ENCODE measurements at regions of chr6 and their contacts with region 1.

Region 1: DNA sequence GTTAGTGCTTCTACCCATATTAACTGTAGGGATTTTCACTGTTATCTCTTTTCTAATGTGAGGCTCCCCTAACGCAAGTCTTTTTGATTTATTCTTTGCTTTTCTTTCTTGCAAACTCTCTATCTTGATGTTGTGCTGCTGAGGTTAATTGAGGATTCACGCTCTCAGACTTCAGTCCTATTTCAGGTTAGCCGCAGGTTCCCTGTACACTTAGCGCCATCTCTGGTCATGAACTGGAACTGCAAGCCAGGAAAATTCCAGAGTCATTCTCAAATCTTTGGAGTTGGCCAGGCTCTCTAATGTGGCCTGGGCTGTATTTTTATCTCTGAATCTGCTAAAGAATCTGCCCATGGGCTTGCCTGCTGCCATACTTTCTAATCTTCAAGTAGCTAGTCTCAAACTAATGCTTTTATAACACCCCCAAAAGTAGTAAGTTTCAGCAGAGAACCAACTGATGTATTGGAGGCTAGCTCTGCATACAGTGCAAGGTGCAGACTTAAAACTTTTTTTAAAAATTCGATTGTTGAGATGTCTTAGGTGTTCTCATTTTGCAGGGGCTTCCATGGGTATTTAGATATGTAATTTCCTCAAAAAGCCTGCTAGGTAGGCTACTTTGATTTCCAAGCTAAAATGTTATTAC is 91.1 kb upstream of the OPRM1 start:
- DNase-seq: peak; percentile 20
- ATAC-seq: peak; percentile 85
- H3K4me3 ChIP-seq: no peak overlapping the region
- H3K27ac ChIP-seq: no peak overlapping the region
- H3K4me1 ChIP-seq: no peaks in the 10 kb centered on the region
- H3K27me3 ChIP-seq: no peaks in the 10 kb centered on the region
- CTCF ChIP-seq: peak; percentile 85
- EP300 ChIP-seq: no peak
- POLR2A ChIP-seq: no peak
- RAD21 ChIP-seq: peak; percentile 47

Region 2: GRCh38 chr6:153032255-153032882 is 915.6 kb before region 1 on chr6:
- CTCF ChIA-PET with region 1: no interaction called
- POLR2A ChIA-PET with region 1: no interaction called
- in situ Hi-C with region 1: no loop called
- intact Hi-C with region 1: loop called (anchors 5 kb)
- DNase-seq: peak; percentile 22
- ATAC-seq: no peak
- H3K4me3 ChIP-seq: no peak overlapping the region
- H3K27ac ChIP-seq: no peak overlapping the region
- H3K4me1 ChIP-seq: peaks cover 12% of the 10 kb centered on the region
- H3K27me3 ChIP-seq: no peaks in the 10 kb centered on the region
- CTCF ChIP-seq: peak; percentile 25; the same call in 1 of the 2 replicates
- EP300 ChIP-seq: no peak
- POLR2A ChIP-seq: no peak
- RAD21 ChIP-seq: no peak

Region 3: GRCh38 chr6:153553627-153554026 is 394.3 kb before region 1 on chr6:
- CTCF ChIA-PET with region 1: no interaction called
- POLR2A ChIA-PET with region 1: no interaction called
- in situ Hi-C with region 1: no loop called
- intact Hi-C with region 1: loop called (anchors 10 kb)
- DNase-seq: peak; percentile 4
- ATAC-seq: peak; percentile 79
- H3K4me3 ChIP-seq: no peak overlapping the region
- H3K27ac ChIP-seq: no peak overlapping the region
- H3K4me1 ChIP-seq: no peaks in the 10 kb centered on the region
- H3K27me3 ChIP-seq: no peaks in the 10 kb centered on the region
- CTCF ChIP-seq: peak; percentile 36; the same call in 1 of the 2 replicates
- EP300 ChIP-seq: no peak
- POLR2A ChIP-seq: no peak
- RAD21 ChIP-seq: no peak

Region 4: GRCh38 chr6:153790876-153791473 is 157.0 kb before region 1 on chr6:
- CTCF ChIA-PET with region 1: no interaction called
- POLR2A ChIA-PET with region 1: no interaction called
- in situ Hi-C with region 1: no loop called
- intact Hi-C with region 1: loop called (anchors 5 kb)
- DNase-seq: peak; percentile 37
- ATAC-seq: peak; percentile 60
- H3K4me3 ChIP-seq: no peak overlapping the region
- H3K27ac ChIP-seq: no peak overlapping the region
- H3K4me1 ChIP-seq: peaks cover 7% of the 10 kb centered on the region
- H3K27me3 ChIP-seq: no peaks in the 10 kb centered on the region
- CTCF ChIP-seq: peak; percentile 50
- EP300 ChIP-seq: no peak
- POLR2A ChIP-seq: no peak
- RAD21 ChIP-seq: no peak

Region 5: GRCh38 chr6:153927867-153928266 is 20.1 kb before region 1 on chr6:
- CTCF ChIA-PET with region 1: no interaction called
- POLR2A ChIA-PET with region 1: no interaction called
- in situ Hi-C with region 1: no loop called
- intact Hi-C with region 1: no loop called
- DNase-seq: no peak
- ATAC-seq: no peak
- H3K4me3 ChIP-seq: no peak overlapping the region
- H3K27ac ChIP-seq: no peak overlapping the region
- H3K4me1 ChIP-seq: no peaks in the 10 kb centered on the region
- H3K27me3 ChIP-seq: no peaks in the 10 kb centered on the region
- CTCF ChIP-seq: no peak
- EP300 ChIP-seq: no peak
- POLR2A ChIP-seq: no peak
- RAD21 ChIP-seq: no peak

Region 6: GRCh38 chr6:154095571-154095970 is 147.6 kb after region 1 on chr6:
- CTCF ChIA-PET with region 1: no interaction called
- POLR2A ChIA-PET with region 1: no interaction called
- in situ Hi-C with region 1: no loop called
- intact Hi-C with region 1: no loop called
- DNase-seq: no peak
- ATAC-seq: no peak
- H3K4me3 ChIP-seq: no peak overlapping the region
- H3K27ac ChIP-seq: no peak overlapping the region
- H3K4me1 ChIP-seq: no peaks in the 10 kb centered on the region
- H3K27me3 ChIP-seq: no peaks in the 10 kb centered on the region; a peak in 1 of 5 replicates
- CTCF ChIP-seq: no peak
- EP300 ChIP-seq: no peak
- POLR2A ChIP-seq: no peak
- RAD21 ChIP-seq: no peak

Measured in HepG2 (cell line).